ENCODE measurements at regions of chr1 and their contacts with region 1.

Region 1: GRCh38 chr1:117605774-117606648 is at the start of gene TENT5C:
- DNase-seq: peak; percentile 98 to 99
- ATAC-seq: peak; percentile 89 to 98 (median 89)
- H3K4me3 ChIP-seq: peak within 1 kb of the TSS; percentile 99
- H3K4me3 Mint-ChIP-seq: peak within 1 kb of the TSS; percentile 96
- H3K27ac ChIP-seq: peak within 1 kb of the TSS; percentile 92
- H3K27ac Mint-ChIP-seq: peak within 1 kb of the TSS; percentile 94 to 98
- H3K4me1 ChIP-seq: peaks cover 32% of the 10 kb centered on the region
- H3K4me1 Mint-ChIP-seq: peaks cover 50 to 54% of the 10 kb centered on the region in 2 donors
- H3K27me3 ChIP-seq: no peaks in the 10 kb centered on the region
- H3K27me3 Mint-ChIP-seq: peaks cover 3 to 7% of the 10 kb centered on the region in 2 donors
- CTCF ChIP-seq: no peak
- total RNA-seq, gene TENT5C: 80.6 to 109 (median 90.9) TPM

Region 2: GRCh38 chr1:117367047-117368018 is 238.7 kb before region 1 on chr1 and contains the start of gene MAN1A2:
- intact Hi-C with region 1: loop called (anchors 5 kb)
- DNase-seq: peak; percentile 68 to 83
- ATAC-seq: peak; percentile 60 to 83 (median 71)
- H3K4me3 ChIP-seq: peak within 1 kb of the TSS; percentile 86
- H3K4me3 Mint-ChIP-seq: peak within 1 kb of the TSS; percentile 96
- H3K27ac ChIP-seq: peak within 1 kb of the TSS; percentile 98
- H3K27ac Mint-ChIP-seq: peak within 1 kb of the TSS; percentile 91 to 94
- H3K4me1 ChIP-seq: peaks cover 14% of the 10 kb centered on the region
- H3K4me1 Mint-ChIP-seq: peaks cover 57% of the 10 kb centered on the region in 2 donors
- H3K27me3 ChIP-seq: no peaks in the 10 kb centered on the region
- H3K27me3 Mint-ChIP-seq: no peaks in the 10 kb centered on the region
- CTCF ChIP-seq: no peak
- total RNA-seq, gene MAN1A2: 75.5 to 90.0 (median 87.1) TPM

Region 3: GRCh38 chr1:117654493-117655219 is 48.6 kb after region 1 on chr1:
- intact Hi-C with region 1: loop called (anchors 2 kb)
- DNase-seq: peak in 1 of 2 donors; percentile 56
- ATAC-seq: peak in 1 of 3 donors; percentile 19
- H3K4me3 ChIP-seq: no peak overlapping the region
- H3K4me3 Mint-ChIP-seq: peak overlapping the region; percentile 80
- H3K27ac ChIP-seq: peak overlapping the region; percentile 80
- H3K27ac Mint-ChIP-seq: peak overlapping the region; percentile 90 to 91
- H3K4me1 ChIP-seq: peaks cover 84% of the 10 kb centered on the region
- H3K4me1 Mint-ChIP-seq: peaks cover 84 to 85% of the 10 kb centered on the region in 2 donors
- H3K27me3 ChIP-seq: no peaks in the 10 kb centered on the region
- H3K27me3 Mint-ChIP-seq: peaks cover 12 to 19% of the 10 kb centered on the region in 2 donors
- CTCF ChIP-seq: no peak

Region 4: GRCh38 chr1:117664314-117664713 is 58.3 kb after region 1 on chr1:
- intact Hi-C with region 1: loop called (anchors 1 kb)
- DNase-seq: peak in 1 of 2 donors; percentile 93
- ATAC-seq: peak; percentile 84 to 91 (median 89)
- H3K4me3 ChIP-seq: no peak overlapping the region
- H3K4me3 Mint-ChIP-seq: peak overlapping the region; percentile 79
- H3K27ac ChIP-seq: peak overlapping the region; percentile 88
- H3K27ac Mint-ChIP-seq: peak overlapping the region; percentile 94 to 97
- H3K4me1 ChIP-seq: peaks cover 62% of the 10 kb centered on the region
- H3K4me1 Mint-ChIP-seq: peaks cover 65 to 67% of the 10 kb centered on the region in 2 donors
- H3K27me3 ChIP-seq: no peaks in the 10 kb centered on the region
- H3K27me3 Mint-ChIP-seq: peaks cover 0 to 3% of the 10 kb centered on the region in 2 donors
- CTCF ChIP-seq: no peak

Measured in natural killer cell (primary cell).